Left ventricle myocardium superior (tissue), 1 donor: ENCODE measurements at regions of chr9 and their contacts with region 1.

Region 1: GRCh38 chr9:69549310-69550202 is 122.6 kb downstream of the APBA1 start:
- DNase-seq: no peak
- ATAC-seq: peak; percentile 73

Region 2: DNA sequence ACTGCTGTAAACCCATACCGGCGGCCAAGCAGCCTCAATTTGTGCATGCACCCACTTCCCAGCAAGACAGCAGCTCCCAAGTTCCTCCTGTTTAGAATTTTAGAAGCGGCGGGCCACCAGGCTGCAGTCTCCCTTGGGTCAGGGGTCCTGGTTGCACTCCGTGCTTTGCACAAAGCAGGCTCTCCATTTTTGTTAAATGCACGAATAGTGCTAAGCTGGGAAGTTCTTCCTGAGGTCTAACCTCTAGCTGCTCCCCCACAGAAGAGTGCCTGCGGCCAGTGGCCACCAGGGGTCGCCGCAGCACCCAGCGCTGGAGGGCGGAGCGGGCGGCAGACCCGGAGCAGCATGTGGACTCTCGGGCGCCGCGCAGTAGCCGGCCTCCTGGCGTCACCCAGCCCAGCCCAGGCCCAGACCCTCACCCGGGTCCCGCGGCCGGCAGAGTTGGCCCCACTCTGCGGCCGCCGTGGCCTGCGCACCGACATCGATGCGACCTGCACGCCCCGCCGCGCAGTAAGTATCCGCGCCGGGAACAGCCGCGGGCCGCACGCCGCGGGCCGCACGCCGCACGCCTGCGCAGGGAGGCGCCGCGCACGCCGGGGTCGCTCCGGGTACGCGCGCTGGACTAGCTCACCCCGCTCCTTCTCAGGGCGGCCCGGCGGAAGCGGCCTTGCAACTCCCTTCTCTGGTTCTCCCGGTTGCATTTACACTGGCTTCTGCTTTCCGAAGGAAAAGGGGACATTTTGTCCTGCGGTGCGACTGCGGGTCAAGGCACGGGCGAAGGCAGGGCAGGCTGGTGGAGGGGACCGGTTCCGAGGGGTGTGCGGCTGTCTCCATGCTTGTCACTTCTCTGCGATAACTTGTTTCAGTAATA is 513.9 kb before region 1 on chr9 and contains the start of gene FXN:
- intact Hi-C with region 1: loop called (anchors 10 kb)
- DNase-seq: peak; percentile 92
- ATAC-seq: peak; percentile 97
- total RNA-seq, gene FXN: 35.8 TPM

Region 3: GRCh38 chr9:69421908-69422801 is 127.4 kb before region 1 on chr9:
- intact Hi-C with region 1: loop called (anchors 2 kb)
- DNase-seq: peak; percentile 51
- ATAC-seq: peak; percentile 84

Region 4: GRCh38 chr9:69719367-69719766 is 169.8 kb after region 1 on chr9:
- intact Hi-C with region 1: no loop called
- DNase-seq: no peak
- ATAC-seq: no peak